ENCODE measurements at regions of chr2 and their contacts with region 1.

Region 1: GRCh38 chr2:55232084-55232862 is at the starts of genes CLHC1 and RPS27A:
- DNase-seq: peak; percentile 89 to 97 (median 94)
- ATAC-seq: peak; percentile 87
- H3K4me3 ChIP-seq: peak within 1 kb of the TSS; percentile 97 to 99
- H3K4me3 Mint-ChIP-seq: peak within 1 kb of the TSS; percentile 93
- H3K27ac ChIP-seq: peak within 1 kb of the TSS; percentile 92 to 99
- H3K27ac Mint-ChIP-seq: peak within 1 kb of the TSS; percentile 97
- H3K4me1 ChIP-seq: peaks cover 35% of the 10 kb centered on the region
- H3K4me1 Mint-ChIP-seq: peaks cover 68% of the 10 kb centered on the region
- H3K27me3 ChIP-seq: no peaks in the 10 kb centered on the region
- H3K27me3 Mint-ChIP-seq: no peaks in the 10 kb centered on the region
- CTCF ChIP-seq: no peak
- total RNA-seq, gene CLHC1: 2.2 to 2.3 TPM
- total RNA-seq, gene RPS27A: 2,135 to 2,231 TPM

Region 2: DNA sequence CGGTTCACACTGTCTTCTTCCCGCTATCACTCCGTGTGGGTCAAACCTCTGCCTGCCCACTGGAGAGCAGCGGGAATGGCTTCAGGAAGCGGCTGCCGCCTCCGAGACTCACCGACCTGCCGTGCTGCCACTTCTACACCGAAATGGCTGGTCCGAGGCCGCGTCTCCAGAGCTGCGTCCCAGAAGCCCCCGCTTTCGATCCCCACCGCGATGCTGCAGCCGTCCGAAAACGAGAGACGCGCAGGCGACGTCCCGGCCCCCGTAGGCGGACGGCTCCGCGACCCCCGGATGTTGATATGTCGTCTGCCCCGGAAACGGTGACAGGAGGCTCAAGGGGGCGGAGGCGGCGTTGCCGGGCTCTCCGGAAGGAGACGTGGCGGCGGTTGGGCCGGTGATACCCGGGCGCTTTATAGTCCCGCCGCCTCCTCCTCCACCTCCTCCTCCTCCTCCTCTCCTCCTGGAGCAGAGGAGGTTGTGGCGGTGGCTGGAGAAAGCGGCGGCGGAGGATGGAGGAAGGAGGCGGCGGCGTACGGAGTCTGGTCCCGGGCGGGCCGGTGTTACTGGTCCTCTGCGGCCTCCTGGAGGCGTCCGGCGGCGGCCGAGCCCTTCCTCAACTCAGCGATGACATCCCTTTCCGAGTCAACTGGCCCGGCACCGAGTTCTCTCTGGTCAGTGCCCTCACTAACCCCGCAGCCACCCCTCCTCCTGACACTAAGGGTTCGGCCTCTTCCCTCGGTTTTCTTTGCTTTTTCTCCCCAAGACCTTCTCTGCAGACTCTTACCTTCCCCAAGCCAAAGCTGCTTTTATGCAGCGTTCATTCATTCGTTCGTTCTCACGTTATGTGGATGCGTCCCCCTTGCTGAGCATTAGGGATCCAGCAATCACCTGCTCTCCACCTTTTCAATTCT is 1445.3 kb before region 1 on chr2 and contains the starts of genes ASB3 and ERLEC1:
- CTCF ChIA-PET with region 1: no interaction called
- POLR2A ChIA-PET with region 1: no interaction called
- intact Hi-C with region 1: loop called in 1 of 2 experiments (anchors 5 kb)
- DNase-seq: peak; percentile 78 to 95 (median 90)
- ATAC-seq: peak; percentile 88
- H3K4me3 ChIP-seq: peak within 1 kb of the TSS; percentile 94 to 96
- H3K4me3 Mint-ChIP-seq: peak within 1 kb of the TSS; percentile 95
- H3K27ac ChIP-seq: peak within 1 kb of the TSS; percentile 88 to 89
- H3K27ac Mint-ChIP-seq: peak within 1 kb of the TSS; percentile 95
- H3K4me1 ChIP-seq: peaks cover 30% of the 10 kb centered on the region
- H3K4me1 Mint-ChIP-seq: peaks cover 63% of the 10 kb centered on the region
- H3K27me3 ChIP-seq: no peaks in the 10 kb centered on the region
- H3K27me3 Mint-ChIP-seq: no peaks in the 10 kb centered on the region
- CTCF ChIP-seq: no peak
- total RNA-seq, gene ASB3: 25.0 to 26.2 TPM
- total RNA-seq, gene ERLEC1: 24.1 to 27.1 TPM

Region 3: DNA sequence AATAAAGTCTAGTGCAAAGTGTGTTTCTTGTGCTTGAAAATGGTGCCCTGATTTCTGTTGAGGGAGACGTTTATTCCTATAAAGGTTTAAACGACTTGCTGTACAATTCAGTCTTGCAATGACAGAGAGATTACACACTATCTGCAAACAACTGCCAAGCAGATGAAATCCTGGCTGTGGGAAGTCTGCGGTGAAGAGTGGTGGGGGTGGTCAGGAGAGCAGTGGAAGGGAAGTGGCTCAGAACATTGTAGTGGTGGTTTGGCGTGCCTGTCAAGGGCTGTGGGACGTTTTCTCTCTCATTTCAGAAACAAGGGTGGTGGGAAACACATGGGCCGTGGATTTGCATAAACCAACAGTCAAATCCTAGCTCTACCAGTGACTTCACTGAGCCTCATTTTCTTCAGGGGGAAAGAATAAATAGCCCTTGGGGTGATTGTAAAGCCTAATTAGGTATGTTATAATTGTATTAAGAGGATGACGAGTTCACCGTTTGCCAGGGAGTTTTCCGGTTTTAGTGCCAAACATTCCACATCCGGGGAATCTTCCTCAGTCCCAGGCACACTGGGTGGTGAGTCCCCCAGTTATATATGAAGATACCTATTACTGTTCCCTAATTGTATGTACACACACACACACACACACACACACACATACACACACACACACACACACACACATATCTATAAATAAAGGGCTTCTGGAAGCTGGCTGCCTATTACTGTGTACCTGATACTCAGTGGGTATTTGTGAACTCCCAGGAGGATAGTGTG is 661.2 kb before region 1 on chr2:
- CTCF ChIA-PET with region 1: no interaction called
- POLR2A ChIA-PET with region 1: no interaction called
- intact Hi-C with region 1: loop called (anchors 5 to 10 kb)
- DNase-seq: peak; percentile 23 to 87 (median 69)
- ATAC-seq: peak; percentile 8
- H3K4me3 ChIP-seq: peak overlapping the region; percentile 13 to 21
- H3K4me3 Mint-ChIP-seq: peak overlapping the region; percentile 81
- H3K27ac ChIP-seq: peak overlapping the region; percentile 87 to 94
- H3K27ac Mint-ChIP-seq: peak overlapping the region; percentile 100
- H3K4me1 ChIP-seq: peaks cover 94% of the 10 kb centered on the region
- H3K4me1 Mint-ChIP-seq: peaks cover 95% of the 10 kb centered on the region
- H3K27me3 ChIP-seq: no peaks in the 10 kb centered on the region
- H3K27me3 Mint-ChIP-seq: no peaks in the 10 kb centered on the region
- CTCF ChIP-seq: no peak

Region 4: GRCh38 chr2:55268907-55269644 is 36.8 kb after region 1 on chr2 and contains the start of gene MTIF2:
- CTCF ChIA-PET with region 1: no interaction called
- POLR2A ChIA-PET with region 1: interaction called, 5 read pairs
- intact Hi-C with region 1: loop called in 1 of 2 experiments (anchors 1 kb)
- DNase-seq: peak; percentile 75 to 93 (median 88)
- ATAC-seq: peak; percentile 83
- H3K4me3 ChIP-seq: peak within 1 kb of the TSS; percentile 61 to 67
- H3K4me3 Mint-ChIP-seq: peak within 1 kb of the TSS; percentile 95
- H3K27ac ChIP-seq: peak within 1 kb of the TSS; percentile 59 to 66
- H3K27ac Mint-ChIP-seq: peak within 1 kb of the TSS; percentile 96
- H3K4me1 ChIP-seq: peaks cover 4% of the 10 kb centered on the region
- H3K4me1 Mint-ChIP-seq: peaks cover 26% of the 10 kb centered on the region
- H3K27me3 ChIP-seq: peaks cover 0 to 2% of the 10 kb centered on the region in 2 experiments
- H3K27me3 Mint-ChIP-seq: no peaks in the 10 kb centered on the region
- CTCF ChIP-seq: no peak
- total RNA-seq, gene MTIF2: 12.2 to 14.4 TPM

Region 5: DNA sequence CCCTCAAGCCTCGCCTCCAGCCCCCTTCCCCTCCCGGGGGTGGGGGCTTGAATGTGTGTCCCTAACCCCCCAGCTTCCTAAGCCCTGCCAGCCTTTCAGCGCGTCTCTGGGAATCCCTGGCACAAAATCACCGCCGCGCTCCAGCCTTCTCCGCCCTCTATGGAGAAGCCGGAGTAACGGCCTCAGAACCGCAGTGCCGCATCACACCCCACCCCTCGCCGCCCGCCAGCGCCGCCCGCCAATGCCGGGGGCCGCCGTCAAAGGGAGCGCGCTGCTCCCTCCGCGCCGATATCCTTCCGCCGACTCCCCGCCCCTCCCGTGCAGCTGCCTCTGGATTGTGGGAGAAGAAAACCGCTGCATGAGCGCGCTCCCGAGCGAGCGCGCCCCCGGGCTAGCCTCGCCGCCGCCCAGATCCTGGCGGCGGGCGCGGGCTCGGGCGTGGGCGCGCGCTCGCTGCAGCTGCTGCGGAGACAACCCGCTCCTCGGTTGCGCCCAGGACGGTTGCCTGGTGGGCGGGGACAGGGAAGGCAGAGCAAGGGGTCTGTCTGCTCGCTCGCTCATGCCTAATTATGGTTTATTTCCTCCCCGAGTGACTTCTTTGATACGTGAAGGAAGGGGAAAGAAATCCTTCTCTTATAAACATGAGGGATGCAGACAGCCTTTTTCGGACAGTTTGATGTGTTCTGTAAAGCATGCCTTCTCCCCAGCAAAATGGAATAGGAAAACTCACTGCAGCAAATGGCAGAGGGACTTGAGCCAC is 187.6 kb after region 1 on chr2 and contains the start of gene CCDC88A:
- CTCF ChIA-PET with region 1: no interaction called
- POLR2A ChIA-PET with region 1: no interaction called
- intact Hi-C with region 1: loop called (anchors 1 to 5 kb)
- DNase-seq: peak; percentile 71 to 96 (median 85)
- ATAC-seq: peak; percentile 80
- H3K4me3 ChIP-seq: peak within 1 kb of the TSS; percentile 75 to 93
- H3K4me3 Mint-ChIP-seq: peak within 1 kb of the TSS; percentile 92
- H3K27ac ChIP-seq: peak within 1 kb of the TSS; percentile 57 to 83
- H3K27ac Mint-ChIP-seq: peak within 1 kb of the TSS; percentile 87
- H3K4me1 ChIP-seq: peaks cover 14% of the 10 kb centered on the region
- H3K4me1 Mint-ChIP-seq: peaks cover 38% of the 10 kb centered on the region
- H3K27me3 ChIP-seq: no peaks in the 10 kb centered on the region
- H3K27me3 Mint-ChIP-seq: peaks cover 4% of the 10 kb centered on the region
- CTCF ChIP-seq: no peak
- total RNA-seq, gene CCDC88A: 9.5 to 12.3 TPM

Region 6: GRCh38 chr2:55693181-55694134 is 461.2 kb after region 1 on chr2 and contains the start of gene PNPT1:
- CTCF ChIA-PET with region 1: no interaction called
- POLR2A ChIA-PET with region 1: no interaction called
- intact Hi-C with region 1: loop called (anchors 1 to 10 kb)
- DNase-seq: peak; percentile 84 to 95 (median 92)
- ATAC-seq: peak; percentile 100
- H3K4me3 ChIP-seq: peak within 1 kb of the TSS; percentile 90 to 98
- H3K4me3 Mint-ChIP-seq: peak within 1 kb of the TSS; percentile 98
- H3K27ac ChIP-seq: peak within 1 kb of the TSS; percentile 59 to 66
- H3K27ac Mint-ChIP-seq: peak within 1 kb of the TSS; percentile 93
- H3K4me1 ChIP-seq: peaks cover 12% of the 10 kb centered on the region
- H3K4me1 Mint-ChIP-seq: peaks cover 40% of the 10 kb centered on the region
- H3K27me3 ChIP-seq: no peaks in the 10 kb centered on the region
- H3K27me3 Mint-ChIP-seq: no peaks in the 10 kb centered on the region
- CTCF ChIP-seq: no peak
- total RNA-seq, gene PNPT1: 12.8 to 13.9 TPM